Spleen (tissue), 13 donors: ENCODE measurements at regions of chr16 and their contacts with region 1.

Region 1: GRCh38 chr16:30692381-30693064 is 6.4 kb upstream of the SRCAP start:
- DNase-seq: no peak
- H3K4me3 ChIP-seq: no peak overlapping the region
- H3K27ac ChIP-seq: peak overlapping the region in 1 of 8 donors; percentile 63
- H3K4me1 ChIP-seq: peaks cover 3 to 37% (median 28%) of the 10 kb centered on the region in 6 donors
- H3K27me3 ChIP-seq: no peaks in the 10 kb centered on the region
- CTCF ChIP-seq: no peak
- POLR2A ChIP-seq: no peak

Region 2: DNA sequence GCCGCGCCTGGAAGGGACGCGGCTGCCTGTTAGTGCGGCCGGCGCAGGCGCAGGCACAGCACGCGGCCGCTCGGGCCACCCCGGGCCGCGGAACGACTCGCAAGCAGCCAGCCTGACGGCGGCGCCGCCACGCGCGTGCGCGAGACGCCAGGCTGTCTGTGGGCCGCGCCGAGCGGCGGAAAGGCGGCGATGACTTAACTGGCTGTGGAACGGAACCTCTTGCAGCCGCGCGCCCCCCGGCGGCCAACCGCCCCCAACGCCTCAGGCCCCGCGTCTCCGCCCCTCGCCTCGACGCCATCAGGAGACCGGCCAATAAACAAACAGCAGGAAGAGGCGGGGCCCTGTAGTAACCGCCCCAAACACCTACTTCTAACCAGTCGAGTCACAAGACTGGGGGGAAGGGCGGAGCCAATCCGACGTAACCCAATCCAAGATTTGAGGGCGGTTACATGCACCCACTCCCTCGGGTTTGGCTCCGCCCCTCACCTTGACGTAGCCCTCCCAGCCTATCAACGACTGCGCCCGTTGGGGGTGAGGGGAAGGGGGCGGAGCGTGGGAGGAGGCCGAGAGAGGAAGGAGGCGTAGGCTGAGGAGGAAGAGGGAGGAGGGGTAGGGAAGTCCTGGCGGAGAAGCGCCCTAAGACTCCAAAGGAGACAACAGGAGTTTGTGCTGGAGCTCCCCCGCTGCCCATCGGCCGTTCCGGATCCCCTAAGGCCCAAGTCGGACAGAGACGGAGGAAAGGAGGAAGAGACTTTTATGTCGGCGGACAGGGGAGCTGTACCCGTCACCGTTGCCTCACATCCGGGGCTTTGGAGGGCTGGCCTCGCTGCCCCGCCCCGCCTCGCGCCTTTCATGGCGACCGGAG is 34.4 kb before region 1 on chr16 and contains the start of gene FBRS:
- intact Hi-C with region 1: loop called (anchors 5 kb)
- DNase-seq: peak; percentile 100
- H3K4me3 ChIP-seq: peak within 1 kb of the TSS; percentile 74 to 93 (median 83)
- H3K27ac ChIP-seq: peak within 1 kb of the TSS; percentile 97 to 100 (median 99)
- H3K4me1 ChIP-seq: peaks cover 22 to 72% (median 52%) of the 10 kb centered on the region in 6 donors
- H3K27me3 ChIP-seq: no peaks in the 10 kb centered on the region
- CTCF ChIP-seq: peak; percentile 91 to 100 (median 98)
- POLR2A ChIP-seq: peak; percentile 12 to 90 (median 56)
- total RNA-seq, gene FBRS: 47.5 to 118 (median 102) TPM

Region 3: GRCh38 chr16:30786936-30787612 is 94.6 kb after region 1 on chr16 and contains the start of gene ZNF629:
- intact Hi-C with region 1: no loop called
- DNase-seq: no peak
- H3K4me3 ChIP-seq: peak within 1 kb of the TSS; percentile 65 to 93 (median 78)
- H3K27ac ChIP-seq: peak within 1 kb of the TSS; percentile 66 to 89 (median 84)
- H3K4me1 ChIP-seq: peaks cover 0 to 42% (median 26%) of the 10 kb centered on the region in 6 donors
- H3K27me3 ChIP-seq: peaks cover 0 to 26% (median 0%) of the 10 kb centered on the region in 7 donors
- CTCF ChIP-seq: no peak
- POLR2A ChIP-seq: no peak
- total RNA-seq, gene ZNF629: 7.6 to 13.9 (median 12.5) TPM